Activated CD4-positive, alpha-beta T cell treated with anti-CD3 and anti-CD28 coated beads for 36 hours (primary cell): ENCODE measurements at regions of chr17 and their contacts with region 1.

Region 1: GRCh38 chr17:2054512-2055291 is at the start of gene HIC1:
- DNase-seq: peak; percentile 89
- ATAC-seq: peak; percentile 62
- H3K4me3 Mint-ChIP-seq: peak within 1 kb of the TSS; percentile 69
- H3K27ac Mint-ChIP-seq: no peak within 1 kb of the TSS
- H3K4me1 Mint-ChIP-seq: peaks cover 21% of the 10 kb centered on the region
- H3K27me3 Mint-ChIP-seq: peaks cover 18% of the 10 kb centered on the region
- total RNA-seq, gene HIC1: 13.6 to 16.5 TPM

Region 2: GRCh38 chr17:2087597-2088211 is 33.0 kb after region 1 on chr17:
- CTCF ChIA-PET with region 1: interaction called, 7 read pairs
- POLR2A ChIA-PET with region 1: interaction called, 4 read pairs
- intact Hi-C with region 1: loop called (anchors 1 to 5 kb)
- DNase-seq: peak; percentile 78
- ATAC-seq: peak; percentile 62
- H3K4me3 Mint-ChIP-seq: peak overlapping the region; percentile 7
- H3K27ac Mint-ChIP-seq: peak overlapping the region; percentile 2
- H3K4me1 Mint-ChIP-seq: peaks cover 69% of the 10 kb centered on the region
- H3K27me3 Mint-ChIP-seq: no peaks in the 10 kb centered on the region

Region 3: DNA sequence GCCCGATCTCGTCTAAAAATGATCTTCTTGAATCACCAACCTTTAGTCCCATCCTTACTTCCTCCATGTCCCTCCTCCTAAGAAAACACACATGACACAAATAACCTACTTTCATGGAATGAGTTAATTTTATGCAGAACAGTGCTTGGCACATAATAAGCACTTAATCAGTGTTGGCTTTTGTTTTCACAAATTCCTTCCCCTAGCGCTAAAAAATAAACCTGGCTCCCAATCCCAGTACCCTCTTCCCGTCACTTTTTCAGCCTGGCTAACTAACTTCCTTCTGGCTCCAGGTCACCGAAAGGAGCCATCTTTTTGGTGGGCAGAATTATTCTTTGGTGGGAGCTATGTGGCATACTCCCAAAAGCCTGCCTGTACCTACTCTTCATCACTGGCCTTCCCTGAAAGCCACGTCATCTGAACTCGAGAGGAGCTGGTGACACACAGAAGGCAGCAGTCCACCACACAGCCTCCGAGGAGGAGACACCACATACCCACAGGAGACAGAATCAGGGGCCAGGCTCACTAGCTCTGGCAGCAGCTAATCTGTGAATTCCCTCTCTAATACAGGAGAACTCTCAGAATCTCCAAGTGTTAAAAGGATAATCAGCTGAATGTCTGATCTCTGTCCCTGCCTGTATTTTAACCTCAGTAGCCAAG is 134.4 kb after region 1 on chr17:
- CTCF ChIA-PET with region 1: no interaction called
- POLR2A ChIA-PET with region 1: no interaction called
- intact Hi-C with region 1: no loop called
- DNase-seq: no peak
- ATAC-seq: no peak
- H3K4me3 Mint-ChIP-seq: no peak overlapping the region
- H3K27ac Mint-ChIP-seq: no peak overlapping the region
- H3K4me1 Mint-ChIP-seq: peaks cover 23% of the 10 kb centered on the region
- H3K27me3 Mint-ChIP-seq: no peaks in the 10 kb centered on the region

Region 4: GRCh38 chr17:2215616-2216364 is 161.1 kb after region 1 on chr17:
- CTCF ChIA-PET with region 1: interaction called, 3 read pairs
- POLR2A ChIA-PET with region 1: interaction called, 3 read pairs
- intact Hi-C with region 1: loop called in 1 of 2 experiments (anchors 1 kb)
- DNase-seq: peak; percentile 85
- ATAC-seq: peak; percentile 97
- H3K4me3 Mint-ChIP-seq: peak overlapping the region; percentile 74
- H3K27ac Mint-ChIP-seq: peak overlapping the region; percentile 96
- H3K4me1 Mint-ChIP-seq: peaks cover 58% of the 10 kb centered on the region
- H3K27me3 Mint-ChIP-seq: no peaks in the 10 kb centered on the region

Region 5: GRCh38 chr17:2259769-2260536 is 205.3 kb after region 1 on chr17:
- CTCF ChIA-PET with region 1: interaction called, 5 read pairs
- POLR2A ChIA-PET with region 1: interaction called, 4 read pairs
- intact Hi-C with region 1: loop called in 1 of 2 experiments (anchors 5 kb)
- DNase-seq: peak; percentile 90
- ATAC-seq: peak; percentile 74
- H3K4me3 Mint-ChIP-seq: peak overlapping the region; percentile 64
- H3K27ac Mint-ChIP-seq: peak overlapping the region; percentile 90
- H3K4me1 Mint-ChIP-seq: peaks cover 73% of the 10 kb centered on the region
- H3K27me3 Mint-ChIP-seq: no peaks in the 10 kb centered on the region

Region 6: DNA sequence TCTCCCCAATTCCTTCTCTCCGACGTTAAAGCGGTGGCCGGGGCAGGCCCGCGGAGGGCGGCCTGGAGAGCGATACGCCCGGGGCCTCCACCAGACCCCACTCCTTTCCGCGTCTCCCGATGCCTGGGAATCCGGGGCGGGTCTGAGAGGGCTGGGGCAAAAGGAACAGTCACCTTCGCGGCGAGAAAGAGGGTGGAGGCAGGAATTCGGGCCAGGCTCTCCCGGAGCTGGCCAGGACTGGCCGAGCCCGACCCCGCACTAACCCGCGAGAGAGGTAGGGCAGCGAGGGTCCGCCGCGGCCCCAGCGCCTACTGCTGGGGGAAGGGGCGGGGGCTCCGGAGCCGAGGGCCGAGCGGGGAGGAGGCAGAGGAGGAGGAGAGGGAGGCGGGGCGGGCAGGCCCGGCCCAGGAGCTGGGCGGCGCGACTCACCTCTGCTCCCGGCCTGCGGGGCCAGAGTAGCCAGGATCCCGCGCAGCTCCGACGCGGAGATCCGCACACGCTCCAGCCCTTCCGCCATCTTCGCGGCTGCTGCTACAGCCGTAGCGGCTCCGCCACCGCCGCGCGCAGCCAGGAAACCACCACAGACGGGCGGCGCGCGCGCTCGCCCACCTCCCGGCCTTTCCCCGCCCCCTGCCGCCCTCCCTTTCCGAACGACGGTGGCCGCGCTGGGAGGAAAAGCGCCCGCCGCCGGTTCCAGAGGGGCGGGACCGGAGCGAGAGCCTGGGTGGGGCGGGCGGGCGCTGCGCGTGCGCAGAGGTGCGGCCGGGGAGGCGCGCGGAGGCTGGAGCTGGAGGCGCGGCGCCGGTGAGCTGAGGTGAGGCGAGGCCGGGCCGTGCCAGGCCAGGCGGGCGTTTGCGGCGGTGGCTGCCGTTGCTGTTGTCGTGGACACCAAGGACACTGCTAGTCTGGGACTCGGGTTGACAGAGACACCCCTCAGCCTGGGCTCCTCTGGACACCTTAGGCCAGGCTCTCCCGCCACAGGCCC is 248.8 kb after region 1 on chr17 and contains the starts of genes SMG6 and SRR:
- CTCF ChIA-PET with region 1: interaction called, 6 read pairs
- POLR2A ChIA-PET with region 1: no interaction called
- intact Hi-C with region 1: loop called in 1 of 2 experiments (anchors 1 kb)
- DNase-seq: peak; percentile 98
- ATAC-seq: peak; percentile 89
- H3K4me3 Mint-ChIP-seq: peak within 1 kb of the TSS; percentile 81
- H3K27ac Mint-ChIP-seq: peak within 1 kb of the TSS; percentile 61
- H3K4me1 Mint-ChIP-seq: peaks cover 46% of the 10 kb centered on the region
- H3K27me3 Mint-ChIP-seq: no peaks in the 10 kb centered on the region
- total RNA-seq, gene SMG6: 28.5 to 31.4 TPM
- total RNA-seq, gene SRR: 15.4 to 18.3 TPM

Region 7: DNA sequence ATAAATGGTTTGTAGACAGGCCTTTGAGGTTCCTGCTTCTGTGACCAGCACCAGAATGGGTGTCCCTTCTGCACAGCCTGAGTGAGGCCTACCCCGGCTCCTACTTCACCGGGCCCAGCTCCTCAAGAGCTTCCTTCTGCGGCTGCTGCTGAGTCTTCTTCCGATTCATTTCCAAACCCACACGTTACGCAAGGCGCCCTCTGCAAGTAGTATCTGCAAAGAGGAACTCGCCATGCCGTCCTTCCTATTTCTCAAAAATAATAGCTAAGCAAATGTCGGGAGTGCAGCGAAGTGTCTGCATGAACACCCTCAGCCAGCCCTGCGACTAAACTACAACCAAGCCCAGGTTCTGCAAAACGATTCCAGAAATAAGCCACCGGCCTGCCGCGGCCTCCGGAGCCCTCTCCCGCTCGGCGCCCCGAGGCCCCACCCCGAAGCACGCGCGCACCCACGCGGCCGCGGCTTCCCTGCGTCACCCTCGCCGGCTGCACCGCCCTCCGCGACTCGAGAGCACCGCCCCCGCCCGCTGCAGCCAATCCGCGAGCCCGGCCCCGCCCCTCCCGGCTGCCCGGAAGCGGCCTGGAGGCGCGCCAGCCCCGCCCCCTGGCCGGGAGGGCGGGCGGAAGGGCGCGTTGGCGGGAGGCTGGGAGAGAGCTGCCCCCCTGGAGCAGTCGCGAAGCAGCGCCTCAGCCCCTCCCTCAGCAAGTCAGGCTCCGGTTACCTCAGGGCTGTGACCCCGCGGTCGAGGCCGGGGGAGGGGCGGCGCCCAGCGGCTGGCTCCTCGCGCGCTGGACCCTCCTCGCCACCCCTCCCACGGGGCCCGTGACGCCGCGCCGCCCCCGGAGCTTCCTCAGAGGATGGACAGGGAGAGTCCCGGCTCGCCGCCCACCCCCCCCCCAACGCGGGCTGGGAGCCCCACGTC is 337.8 kb after region 1 on chr17:
- CTCF ChIA-PET with region 1: no interaction called
- POLR2A ChIA-PET with region 1: no interaction called
- intact Hi-C with region 1: loop called in 1 of 2 experiments (anchors 1 kb)
- DNase-seq: peak; percentile 99
- ATAC-seq: peak; percentile 72
- H3K4me3 Mint-ChIP-seq: peak overlapping the region; percentile 80
- H3K27ac Mint-ChIP-seq: peak overlapping the region; percentile 94
- H3K4me1 Mint-ChIP-seq: peaks cover 52% of the 10 kb centered on the region
- H3K27me3 Mint-ChIP-seq: no peaks in the 10 kb centered on the region